ENCODE measurements at regions of chr9 and their contacts with region 1.

Region 1: GRCh38 chr9:35646533-35647265 is 4.0 kb downstream of the SIT1 start:
- DNase-seq: peak; percentile 86 to 99 (median 94)
- ATAC-seq: peak; percentile 95 to 97 (median 96)
- H3K4me3 ChIP-seq: peak overlapping the region; percentile 30 to 67 (median 48)
- H3K27ac ChIP-seq: peak overlapping the region; percentile 72 to 94 (median 82)
- H3K4me1 ChIP-seq: peaks cover 0 to 10% (median 0%) of the 10 kb centered on the region in 3 donors
- H3K27me3 ChIP-seq: no peaks in the 10 kb centered on the region
- CTCF ChIP-seq: peak; percentile 87 to 95 (median 90)

Region 2: DNA sequence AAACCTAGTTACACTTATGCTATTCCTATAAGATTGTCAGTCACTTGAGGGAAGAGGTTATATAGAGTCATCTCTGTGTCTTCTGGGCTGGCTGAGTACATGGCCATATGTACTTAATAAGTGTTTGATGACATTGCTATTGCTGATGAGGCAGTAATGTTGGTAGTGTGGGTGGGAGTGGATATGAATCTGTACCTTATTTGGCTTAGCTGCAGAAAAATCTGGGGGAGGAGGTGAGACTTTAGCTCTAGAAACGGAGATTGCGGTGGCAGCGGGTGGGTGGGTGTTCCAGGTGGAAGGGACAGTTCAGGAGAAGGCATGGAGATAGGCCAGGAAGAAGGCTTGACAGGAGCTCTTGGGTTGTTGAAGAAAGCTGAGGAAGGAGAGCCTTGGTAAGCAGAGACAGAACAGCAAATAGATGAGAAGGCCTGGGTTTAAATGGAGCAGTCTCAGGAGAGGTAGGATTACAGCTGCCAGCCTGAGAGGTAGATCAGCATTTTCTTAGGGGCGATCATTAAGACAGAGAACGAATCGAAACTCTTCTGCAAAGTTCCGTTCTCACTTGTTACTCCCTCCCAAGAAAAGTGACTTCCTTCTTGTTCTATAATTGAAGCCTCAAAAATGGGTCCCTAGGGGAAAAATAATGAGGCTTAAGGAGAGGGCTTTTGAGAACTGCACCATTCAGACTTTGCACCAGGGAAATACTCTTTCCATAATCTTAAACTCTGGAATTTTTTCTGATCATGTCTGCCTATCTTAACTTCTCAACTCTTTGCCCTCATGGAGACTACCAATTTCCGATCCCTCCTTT is 324.4 kb before region 1 on chr9:
- intact Hi-C with region 1: no loop called
- DNase-seq: no peak
- ATAC-seq: no peak
- H3K4me3 ChIP-seq: no peak overlapping the region
- H3K27ac ChIP-seq: no peak overlapping the region
- H3K4me1 ChIP-seq: no peaks in the 10 kb centered on the region
- H3K27me3 ChIP-seq: no peaks in the 10 kb centered on the region
- CTCF ChIP-seq: no peak

Region 3: DNA sequence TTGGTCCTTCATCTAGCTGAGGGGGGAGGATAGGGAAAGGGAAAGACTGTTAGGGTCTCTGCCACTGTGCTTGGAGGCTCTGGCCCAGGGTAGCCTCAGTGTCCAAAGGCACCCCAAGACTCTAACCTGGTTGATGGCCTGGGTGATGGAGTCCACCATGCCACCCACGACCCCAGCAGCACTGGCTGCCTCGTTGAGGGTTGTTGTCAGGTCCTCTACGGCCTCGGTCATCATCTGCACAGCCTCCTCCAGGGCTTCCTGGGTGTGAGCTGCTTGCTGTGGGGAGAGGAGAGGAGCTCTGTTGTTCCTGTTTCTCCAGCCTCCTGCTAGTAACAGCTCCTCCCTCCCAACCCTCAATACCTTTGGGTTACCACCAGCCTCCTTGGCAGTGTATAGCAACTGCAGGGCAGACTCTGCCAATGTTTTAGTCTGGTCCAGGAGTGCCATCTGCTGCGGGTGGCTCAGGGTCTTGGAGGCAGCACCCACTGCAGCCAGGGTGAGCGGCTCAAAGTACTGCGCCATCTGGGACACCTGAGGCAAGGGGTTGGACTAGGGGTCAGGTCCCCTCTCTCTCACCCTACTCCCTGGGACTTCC is 59.2 kb after region 1 on chr9:
- intact Hi-C with region 1: loop called in 1 of 3 experiments (anchors 10 kb)
- DNase-seq: no peak
- ATAC-seq: peak in 1 of 4 donors; percentile 6
- H3K4me3 ChIP-seq: no peak overlapping the region
- H3K27ac ChIP-seq: no peak overlapping the region
- H3K4me1 ChIP-seq: no peaks in the 10 kb centered on the region
- H3K27me3 ChIP-seq: no peaks in the 10 kb centered on the region
- CTCF ChIP-seq: no peak

Region 4: GRCh38 chr9:35798658-35799374 is 152.1 kb after region 1 on chr9:
- intact Hi-C with region 1: no loop called
- DNase-seq: no peak
- ATAC-seq: peak in 3 of 4 donors; percentile 16 to 68 (median 60)
- H3K4me3 ChIP-seq: no peak overlapping the region
- H3K27ac ChIP-seq: no peak overlapping the region
- H3K4me1 ChIP-seq: no peaks in the 10 kb centered on the region
- H3K27me3 ChIP-seq: no peaks in the 10 kb centered on the region
- CTCF ChIP-seq: no peak

Measured in pancreas (tissue), 10 donors.